ENCODE measurements at regions of chr15 and their contacts with region 1.

Region 1: DNA sequence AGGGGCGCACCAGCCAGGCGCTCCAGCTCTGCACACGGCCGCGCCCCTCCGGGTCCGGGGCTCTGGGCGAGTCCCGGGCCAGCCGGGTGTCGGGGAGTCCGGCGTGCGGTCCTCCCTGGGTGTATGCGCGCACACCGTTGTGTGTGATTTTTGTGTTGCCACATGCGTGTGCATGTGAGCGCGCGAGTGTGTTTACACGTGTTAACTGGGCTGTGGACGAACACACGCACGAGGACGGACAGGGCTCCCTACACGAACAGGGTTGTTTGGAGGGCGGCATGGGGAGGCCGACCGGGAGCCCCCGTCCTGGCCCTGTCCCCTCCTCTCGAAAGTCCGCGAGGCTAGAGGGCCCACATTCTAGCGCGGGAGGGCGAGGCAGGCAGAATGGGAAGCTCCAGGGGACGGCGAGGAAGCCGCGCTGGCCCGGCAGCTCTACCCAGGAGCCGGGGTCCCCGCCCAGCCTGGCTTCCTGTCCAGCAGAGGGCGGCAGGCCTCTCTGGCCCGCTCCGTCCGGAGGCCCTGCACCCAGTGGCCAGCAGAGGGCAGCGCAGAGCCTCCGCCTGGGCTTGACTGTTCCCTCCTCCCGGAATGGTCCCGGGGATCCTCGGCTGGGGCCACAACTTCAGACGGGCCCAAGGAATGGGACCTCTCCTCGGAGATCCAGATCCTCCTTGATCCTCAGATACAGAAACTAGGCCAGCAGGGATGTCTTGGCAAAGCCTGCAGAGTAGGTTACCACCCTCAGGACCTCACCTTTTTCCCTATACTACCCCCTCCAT is 611 bp upstream of the LINGO1 start:
- DNase-seq: peak; percentile 17
- H3K4me3 ChIP-seq: peak overlapping the region; percentile 52
- CTCF ChIP-seq: peak; percentile 100

Region 2: DNA sequence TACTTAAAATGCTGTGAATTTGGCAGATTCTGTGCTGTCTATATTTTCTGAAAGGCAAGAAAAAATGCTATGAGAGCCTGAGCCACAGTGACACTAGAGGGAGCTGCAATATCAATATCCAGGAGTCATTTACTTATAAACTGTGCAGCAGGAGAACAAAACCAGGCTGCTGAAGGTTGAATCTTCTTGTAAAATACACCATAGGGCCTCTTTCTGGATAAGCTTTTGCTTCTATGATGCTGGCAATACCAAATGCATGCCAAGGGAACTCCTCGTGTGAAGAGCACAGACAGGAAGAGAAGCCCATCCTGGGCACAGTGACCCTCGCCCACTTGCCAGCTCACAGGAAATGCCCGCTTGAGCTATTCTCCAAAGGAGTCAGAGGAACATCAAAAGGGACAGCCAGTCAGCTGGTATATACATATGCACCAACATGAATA is 514.4 kb before region 1 on chr15:
- CTCF ChIA-PET with region 1: interaction called, 10 read pairs
- POLR2A ChIA-PET with region 1: no interaction called
- DNase-seq: no peak
- H3K4me3 ChIP-seq: no peak overlapping the region
- CTCF ChIP-seq: peak; percentile 56

Region 3: GRCh38 chr15:77617476-77618230 is 15.7 kb before region 1 on chr15:
- CTCF ChIA-PET with region 1: interaction called, 100 read pairs
- POLR2A ChIA-PET with region 1: no interaction called
- DNase-seq: no peak
- H3K4me3 ChIP-seq: no peak overlapping the region
- CTCF ChIP-seq: peak; percentile 29

Region 4: GRCh38 chr15:77659350-77660321 is 26.3 kb after region 1 on chr15:
- CTCF ChIA-PET with region 1: interaction called, 13 read pairs
- POLR2A ChIA-PET with region 1: no interaction called
- DNase-seq: no peak
- H3K4me3 ChIP-seq: no peak overlapping the region
- CTCF ChIP-seq: peak; percentile 34

Region 5: DNA sequence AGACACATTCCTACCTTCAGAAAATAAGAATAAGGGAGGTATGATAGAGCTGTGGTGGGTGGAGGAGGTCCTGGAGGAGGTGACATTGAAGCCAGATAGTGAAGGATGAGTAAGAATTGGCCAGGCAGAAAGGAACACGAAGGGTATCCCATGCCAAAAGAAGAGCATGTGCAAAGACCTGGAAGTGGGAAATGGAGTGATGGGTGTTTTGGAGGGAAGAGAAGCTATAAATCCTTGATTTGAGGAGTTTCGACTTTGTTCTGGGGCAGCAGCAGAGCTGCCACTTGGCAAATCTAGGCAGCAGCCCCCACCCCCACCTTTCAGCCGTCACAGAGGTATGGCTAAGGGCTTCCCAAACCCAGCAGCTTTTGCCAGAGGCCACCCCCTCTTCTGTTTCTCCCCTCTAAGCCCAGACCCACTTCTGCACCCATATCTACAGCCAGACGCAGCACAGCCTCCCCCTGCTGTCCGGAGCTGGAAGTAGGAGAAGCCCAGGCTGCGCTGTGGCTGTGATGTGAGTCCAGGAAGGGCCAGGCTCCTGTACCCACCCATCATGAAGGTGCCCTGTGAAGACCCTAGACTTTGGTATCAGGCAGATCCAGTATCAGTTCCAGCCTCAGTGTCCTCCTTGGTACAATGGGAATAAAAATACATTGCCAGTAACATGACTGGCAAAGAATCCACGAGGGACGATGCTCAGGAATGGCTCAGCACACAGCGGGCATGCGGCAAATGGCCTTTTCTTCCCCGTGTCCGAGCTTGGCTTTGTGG is 188.1 kb after region 1 on chr15:
- CTCF ChIA-PET with region 1: interaction called, 161 read pairs
- POLR2A ChIA-PET with region 1: no interaction called
- DNase-seq: no peak
- H3K4me3 ChIP-seq: no peak overlapping the region
- CTCF ChIP-seq: peak; percentile 91

Region 6: GRCh38 chr15:77870195-77871065 is 237.1 kb after region 1 on chr15:
- CTCF ChIA-PET with region 1: interaction called, 13 read pairs
- POLR2A ChIA-PET with region 1: no interaction called
- DNase-seq: no peak
- H3K4me3 ChIP-seq: no peak overlapping the region
- CTCF ChIP-seq: peak; percentile 81